T-cell (primary cell): ENCODE measurements at regions of chr5 and their contacts with region 1.

Region 1: GRCh38 chr5:54243473-54244080 is 66.8 kb downstream of the ARL15 start:
- DNase-seq: peak in 24 of 35 experiments; percentile 3 to 62 (median 16)
- ATAC-seq: no peak
- H3K4me3 ChIP-seq: no peak overlapping the region
- H3K4me3 Mint-ChIP-seq: no peak overlapping the region
- H3K27ac ChIP-seq: no peak overlapping the region
- H3K27ac Mint-ChIP-seq: no peak overlapping the region
- H3K4me1 ChIP-seq: no peaks in the 10 kb centered on the region
- H3K4me1 Mint-ChIP-seq: peaks cover 9 to 18% (median 14%) of the 10 kb centered on the region in 3 donors
- H3K27me3 ChIP-seq: no peaks in the 10 kb centered on the region
- H3K27me3 Mint-ChIP-seq: no peaks in the 10 kb centered on the region

Region 2: DNA sequence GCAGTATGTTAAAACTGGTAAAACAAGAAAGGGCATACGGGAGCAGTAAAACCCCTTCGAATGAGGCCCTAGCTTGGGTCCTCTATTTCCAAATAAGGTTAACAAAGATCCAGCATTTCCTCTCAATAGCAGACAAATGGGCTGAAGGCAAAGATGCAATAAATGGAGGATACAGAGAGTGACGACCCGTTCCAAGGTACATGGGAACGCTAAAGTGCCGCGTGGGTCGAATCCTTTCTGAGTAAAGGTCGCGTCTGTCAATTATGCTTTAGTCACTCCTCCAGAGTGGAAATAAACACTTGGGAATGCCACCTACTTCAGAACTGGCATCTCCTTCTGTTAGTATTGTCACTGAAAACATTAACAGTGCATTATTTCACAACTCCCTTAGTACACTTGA is 42.1 kb after region 1 on chr5:
- CTCF ChIA-PET with region 1: no interaction called
- POLR2A ChIA-PET with region 1: no interaction called
- DNase-seq: no peak
- ATAC-seq: no peak
- H3K4me3 ChIP-seq: no peak overlapping the region
- H3K4me3 Mint-ChIP-seq: no peak overlapping the region
- H3K27ac ChIP-seq: no peak overlapping the region
- H3K27ac Mint-ChIP-seq: no peak overlapping the region
- H3K4me1 ChIP-seq: no peaks in the 10 kb centered on the region
- H3K4me1 Mint-ChIP-seq: peaks cover 5 to 21% (median 7%) of the 10 kb centered on the region in 3 donors
- H3K27me3 ChIP-seq: no peaks in the 10 kb centered on the region
- H3K27me3 Mint-ChIP-seq: no peaks in the 10 kb centered on the region

Region 3: DNA sequence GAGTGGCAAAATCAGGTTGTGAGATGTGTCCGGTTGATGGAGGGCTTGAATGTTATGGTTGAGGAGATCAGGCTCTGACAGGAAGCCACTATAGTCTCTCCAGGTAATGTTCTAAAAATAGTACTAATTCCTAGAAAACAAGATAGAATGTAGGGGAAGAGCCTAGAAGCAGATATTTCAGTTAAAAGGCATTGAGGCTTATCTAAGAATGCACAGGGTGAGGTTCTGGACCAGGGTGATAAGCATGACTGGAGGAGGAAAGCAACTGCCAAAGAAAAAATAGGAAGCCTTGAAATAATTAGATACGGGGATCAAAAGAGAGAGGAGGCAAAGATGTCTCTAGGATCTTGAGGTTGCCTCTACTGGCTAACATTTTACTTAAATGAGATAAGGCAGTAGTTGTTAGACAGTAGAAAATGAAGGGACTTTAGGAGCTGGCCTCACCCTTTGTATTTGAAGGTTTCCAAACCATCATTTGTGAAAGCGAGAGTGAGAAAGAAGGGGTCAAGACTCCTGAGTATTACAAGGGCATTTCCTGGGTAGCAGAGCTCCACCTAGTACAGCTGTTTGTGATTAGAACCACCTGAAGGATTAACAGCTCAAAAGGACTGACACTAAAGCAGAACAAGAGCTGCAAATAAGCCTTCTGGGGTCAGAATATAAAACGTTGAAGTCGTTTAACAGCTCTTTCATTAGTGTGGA is 82.2 kb after region 1 on chr5:
- CTCF ChIA-PET with region 1: no interaction called
- POLR2A ChIA-PET with region 1: no interaction called
- DNase-seq: no peak
- ATAC-seq: no peak
- H3K4me3 ChIP-seq: no peak overlapping the region
- H3K4me3 Mint-ChIP-seq: no peak overlapping the region
- H3K27ac ChIP-seq: no peak overlapping the region
- H3K27ac Mint-ChIP-seq: no peak overlapping the region
- H3K4me1 ChIP-seq: no peaks in the 10 kb centered on the region
- H3K4me1 Mint-ChIP-seq: peaks cover 0 to 7% (median 0%) of the 10 kb centered on the region in 3 donors
- H3K27me3 ChIP-seq: peaks cover 0 to 3% of the 10 kb centered on the region in 2 experiments
- H3K27me3 Mint-ChIP-seq: peaks cover 11 to 17% of the 10 kb centered on the region in 2 donors

Region 4: GRCh38 chr5:54415896-54416601 is 172.5 kb after region 1 on chr5:
- CTCF ChIA-PET with region 1: interaction called, 16 to 25 read pairs
- POLR2A ChIA-PET with region 1: interaction called in 1 of 2 experiments, 3 read pairs
- DNase-seq: no peak
- ATAC-seq: no peak
- H3K4me3 ChIP-seq: no peak overlapping the region
- H3K4me3 Mint-ChIP-seq: no peak overlapping the region
- H3K27ac ChIP-seq: no peak overlapping the region
- H3K27ac Mint-ChIP-seq: no peak overlapping the region
- H3K4me1 ChIP-seq: no peaks in the 10 kb centered on the region
- H3K4me1 Mint-ChIP-seq: no peaks in the 10 kb centered on the region
- H3K27me3 ChIP-seq: peaks cover 0 to 5% of the 10 kb centered on the region in 2 experiments
- H3K27me3 Mint-ChIP-seq: peaks cover 3 to 16% of the 10 kb centered on the region in 2 donors

Region 5: GRCh38 chr5:54425258-54425657 is 181.7 kb after region 1 on chr5:
- CTCF ChIA-PET with region 1: interaction called in 1 of 2 experiments, 12 read pairs
- POLR2A ChIA-PET with region 1: no interaction called
- DNase-seq: no peak
- ATAC-seq: no peak
- H3K4me3 ChIP-seq: no peak overlapping the region
- H3K4me3 Mint-ChIP-seq: no peak overlapping the region
- H3K27ac ChIP-seq: no peak overlapping the region
- H3K27ac Mint-ChIP-seq: no peak overlapping the region
- H3K4me1 ChIP-seq: no peaks in the 10 kb centered on the region
- H3K4me1 Mint-ChIP-seq: no peaks in the 10 kb centered on the region
- H3K27me3 ChIP-seq: peaks cover 0 to 10% of the 10 kb centered on the region in 2 experiments
- H3K27me3 Mint-ChIP-seq: peaks cover 16 to 23% of the 10 kb centered on the region in 2 donors

Region 6: GRCh38 chr5:54469622-54470021 is 226.0 kb after region 1 on chr5:
- CTCF ChIA-PET with region 1: no interaction called
- POLR2A ChIA-PET with region 1: no interaction called
- DNase-seq: no peak
- ATAC-seq: no peak
- H3K4me3 ChIP-seq: no peak overlapping the region
- H3K4me3 Mint-ChIP-seq: peak overlapping the region in 2 of 3 donors; percentile 13 to 24
- H3K27ac ChIP-seq: no peak overlapping the region
- H3K27ac Mint-ChIP-seq: no peak overlapping the region
- H3K4me1 ChIP-seq: no peaks in the 10 kb centered on the region
- H3K4me1 Mint-ChIP-seq: peaks cover 7 to 10% (median 9%) of the 10 kb centered on the region in 3 donors
- H3K27me3 ChIP-seq: peaks cover 0 to 9% of the 10 kb centered on the region in 2 experiments
- H3K27me3 Mint-ChIP-seq: peaks cover 5 to 9% of the 10 kb centered on the region in 2 donors